ENCODE measurements at regions of chr7 and their contacts with region 1.

Region 1: GRCh38 chr7:92833024-92833765 is 3.2 kb downstream of the CDK6 start:
- DNase-seq: peak; percentile 90 to 95
- ATAC-seq: peak; percentile 89
- H3K4me3 ChIP-seq: peak overlapping the region; percentile 97 to 98
- H3K27ac ChIP-seq: peak overlapping the region in 1 of 2 donors; percentile 60
- H3K4me1 ChIP-seq: no peaks in the 10 kb centered on the region
- H3K27me3 ChIP-seq: no peaks in the 10 kb centered on the region

Region 2: GRCh38 chr7:92621026-92621540 is 212.1 kb before region 1 on chr7:
- intact Hi-C with region 1: loop called in 1 of 2 experiments (anchors 5 kb)
- DNase-seq: peak; percentile 79 to 82
- ATAC-seq: peak; percentile 91
- H3K4me3 ChIP-seq: no peak overlapping the region
- H3K27ac ChIP-seq: peak overlapping the region; percentile 81 to 93
- H3K4me1 ChIP-seq: peaks cover 0 to 3% of the 10 kb centered on the region in 2 donors
- H3K27me3 ChIP-seq: no peaks in the 10 kb centered on the region

Region 3: DNA sequence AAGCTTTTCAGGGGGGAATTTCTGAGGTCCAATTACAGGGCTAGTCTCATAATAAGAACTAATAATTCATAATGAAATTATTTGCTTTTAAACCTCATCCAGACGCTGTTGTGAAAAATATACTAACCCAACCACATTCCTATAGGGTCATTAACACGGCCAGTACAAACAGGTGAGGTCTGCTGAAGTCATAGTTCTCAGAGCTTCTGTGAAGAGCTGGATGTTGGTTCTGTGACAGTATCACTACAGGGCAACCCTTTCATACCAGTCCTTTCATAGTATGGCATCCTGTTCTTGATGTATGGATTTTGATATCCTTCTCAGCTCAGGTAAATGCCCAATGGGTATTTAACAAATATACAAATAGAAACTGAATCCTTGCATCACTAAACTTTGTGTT is 180.7 kb before region 1 on chr7:
- intact Hi-C with region 1: no loop called
- DNase-seq: no peak
- ATAC-seq: no peak
- H3K4me3 ChIP-seq: no peak overlapping the region
- H3K27ac ChIP-seq: no peak overlapping the region
- H3K4me1 ChIP-seq: peaks cover 0 to 3% of the 10 kb centered on the region in 2 donors
- H3K27me3 ChIP-seq: no peaks in the 10 kb centered on the region

Region 4: DNA sequence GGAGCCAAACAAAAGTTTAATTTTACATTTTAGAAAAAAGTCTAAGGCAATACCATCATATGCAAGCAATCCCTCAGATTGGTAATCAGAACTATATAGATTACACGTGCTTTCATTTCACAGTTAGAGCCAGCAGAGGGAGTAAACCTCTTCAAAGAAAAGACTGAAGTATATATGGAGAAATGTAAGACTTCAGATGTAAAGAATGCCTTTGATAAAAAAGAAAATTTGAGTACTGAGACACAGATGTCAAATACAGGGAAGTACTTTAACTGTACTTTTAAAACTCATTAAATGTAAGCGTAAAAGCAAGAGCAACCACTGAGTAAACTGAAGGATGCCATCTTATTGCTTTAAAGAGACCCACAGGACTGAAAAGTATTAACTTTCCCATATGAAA is 141.6 kb before region 1 on chr7:
- intact Hi-C with region 1: loop called (anchors 5 kb)
- DNase-seq: no peak
- ATAC-seq: no peak
- H3K4me3 ChIP-seq: no peak overlapping the region
- H3K27ac ChIP-seq: no peak overlapping the region
- H3K4me1 ChIP-seq: peaks cover 1 to 2% of the 10 kb centered on the region in 2 donors
- H3K27me3 ChIP-seq: no peaks in the 10 kb centered on the region

Region 5: GRCh38 chr7:92768501-92769393 is 64.4 kb before region 1 on chr7:
- intact Hi-C with region 1: loop called in 1 of 2 experiments (anchors 10 kb)
- DNase-seq: no peak
- ATAC-seq: no peak
- H3K4me3 ChIP-seq: no peak overlapping the region
- H3K27ac ChIP-seq: no peak overlapping the region
- H3K4me1 ChIP-seq: peaks cover under 1 to 10% of the 10 kb centered on the region in 2 donors
- H3K27me3 ChIP-seq: no peaks in the 10 kb centered on the region

Region 6: GRCh38 chr7:92809397-92810241 is 23.6 kb before region 1 on chr7:
- intact Hi-C with region 1: loop called in 1 of 2 experiments (anchors 2 kb)
- DNase-seq: peak in 1 of 2 donors; percentile 58
- ATAC-seq: peak; percentile 86
- H3K4me3 ChIP-seq: no peak overlapping the region
- H3K27ac ChIP-seq: no peak overlapping the region
- H3K4me1 ChIP-seq: no peaks in the 10 kb centered on the region
- H3K27me3 ChIP-seq: no peaks in the 10 kb centered on the region

Region 7: GRCh38 chr7:92898798-92899197 is 65.6 kb after region 1 on chr7:
- intact Hi-C with region 1: no loop called
- DNase-seq: no peak
- ATAC-seq: no peak
- H3K4me3 ChIP-seq: no peak overlapping the region
- H3K27ac ChIP-seq: no peak overlapping the region
- H3K4me1 ChIP-seq: no peaks in the 10 kb centered on the region
- H3K27me3 ChIP-seq: no peaks in the 10 kb centered on the region